Psoas muscle (tissue), 8 donors: ENCODE measurements at regions of chr21 and their contacts with region 1.

Region 1: DNA sequence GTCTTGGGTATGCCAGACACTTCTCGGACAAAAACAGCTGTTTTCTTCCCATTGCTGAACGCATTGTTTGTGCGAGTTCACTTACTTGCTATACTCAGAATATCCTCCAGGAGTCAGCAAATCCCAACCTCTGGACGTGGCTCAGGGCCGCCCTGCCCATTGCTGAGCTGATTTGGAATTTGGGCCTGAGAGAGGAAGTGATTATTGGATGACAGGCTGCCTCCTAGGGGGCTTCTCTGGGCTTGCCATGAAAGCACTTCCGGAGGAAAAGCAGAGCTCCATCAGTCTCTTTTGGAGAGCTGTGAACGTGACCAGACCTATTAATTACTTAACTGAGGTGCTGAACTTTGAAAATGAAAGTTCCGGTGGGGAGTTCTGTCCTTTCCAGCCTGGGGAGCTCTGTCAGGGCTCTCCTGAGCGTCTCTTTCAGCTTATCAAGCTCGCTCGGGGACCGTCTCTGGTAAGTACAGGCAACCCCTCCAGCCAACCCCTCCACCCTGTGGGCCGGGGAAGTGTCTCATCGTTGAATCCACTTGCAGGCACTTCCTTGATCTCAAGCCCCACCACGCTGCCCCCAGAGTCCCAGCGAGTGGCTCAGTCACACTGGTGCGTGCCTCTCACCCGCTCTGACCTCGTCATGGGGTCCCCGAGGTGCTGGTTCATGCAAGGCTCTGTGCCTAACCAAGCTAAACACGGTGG is 76.9 kb downstream of the CLIC6 start:
- DNase-seq: peak; percentile 64 to 81
- ATAC-seq: peak; percentile 80 to 96 (median 84)
- H3K4me3 ChIP-seq: no peak overlapping the region
- H3K27ac ChIP-seq: peak overlapping the region; percentile 17
- H3K4me1 ChIP-seq: peaks cover 8% of the 10 kb centered on the region
- H3K27me3 ChIP-seq: peaks cover 0 to 5% (median 0%) of the 10 kb centered on the region in 3 donors
- CTCF ChIP-seq: peak; percentile 93

Region 2: GRCh38 chr21:35026617-35027562 is 281.2 kb after region 1 on chr21:
- intact Hi-C with region 1: loop called in 1 of 2 experiments (anchors 10 kb)
- DNase-seq: peak; percentile 66 to 76
- ATAC-seq: peak; percentile 26 to 61 (median 40)
- H3K4me3 ChIP-seq: peak overlapping the region; percentile 11
- H3K27ac ChIP-seq: no peak overlapping the region
- H3K4me1 ChIP-seq: peaks cover 4% of the 10 kb centered on the region
- H3K27me3 ChIP-seq: no peaks in the 10 kb centered on the region
- CTCF ChIP-seq: no peak

Region 3: DNA sequence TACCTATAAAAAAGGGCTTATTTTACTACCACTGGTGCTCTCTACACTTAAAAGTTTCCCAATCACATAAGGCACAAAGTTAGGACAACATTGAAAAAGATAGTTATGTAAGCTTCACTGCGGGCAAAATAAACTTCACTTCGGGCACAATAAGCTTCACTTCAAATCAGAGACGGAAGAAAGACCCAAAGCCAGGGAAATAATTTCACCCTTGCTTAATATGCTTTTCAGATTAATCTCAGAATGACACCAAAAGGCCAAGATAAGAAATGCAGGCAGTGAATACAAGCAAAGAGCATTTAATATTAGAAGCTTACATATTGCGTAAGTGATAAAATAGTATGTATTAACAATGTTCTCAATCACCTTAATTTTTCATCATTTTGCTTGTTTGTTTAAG is 870.4 kb after region 1 on chr21:
- intact Hi-C with region 1: loop called in 1 of 2 experiments (anchors 10 kb)
- DNase-seq: no peak
- ATAC-seq: peak in 1 of 4 donors; percentile 35
- H3K4me3 ChIP-seq: no peak overlapping the region
- H3K27ac ChIP-seq: no peak overlapping the region
- H3K4me1 ChIP-seq: no peaks in the 10 kb centered on the region
- H3K27me3 ChIP-seq: no peaks in the 10 kb centered on the region
- CTCF ChIP-seq: peak; percentile 46

Region 4: GRCh38 chr21:35940074-35940927 is 1194.6 kb after region 1 on chr21:
- intact Hi-C with region 1: loop called (anchors 5 to 10 kb)
- DNase-seq: peak; percentile 21 to 49
- ATAC-seq: peak; percentile 87 to 97 (median 92)
- H3K4me3 ChIP-seq: peak overlapping the region; percentile 40
- H3K27ac ChIP-seq: no peak overlapping the region
- H3K4me1 ChIP-seq: no peaks in the 10 kb centered on the region
- H3K27me3 ChIP-seq: no peaks in the 10 kb centered on the region
- CTCF ChIP-seq: peak; percentile 68